GM18951 (cell line): ENCODE measurements at regions of chr6 and their contacts with region 1.

Region 1: DNA sequence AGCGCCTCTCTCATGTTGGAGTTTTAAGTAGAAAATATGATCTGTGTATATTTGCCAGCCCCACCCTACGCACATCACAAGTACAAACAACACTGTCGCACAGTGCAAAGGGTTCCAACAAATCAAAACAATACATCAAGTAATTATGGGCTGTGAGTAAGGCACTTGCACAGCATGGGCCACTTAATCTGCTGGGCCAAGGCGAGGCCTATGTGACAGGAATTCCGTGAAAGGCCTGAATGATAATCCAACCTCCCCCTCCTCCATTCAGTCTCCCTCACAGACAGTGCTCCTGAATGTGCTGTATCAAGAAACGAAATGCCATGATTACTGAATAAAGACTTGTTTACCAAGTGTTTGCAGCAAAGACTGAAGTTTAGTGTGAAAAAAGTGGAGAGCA is 130.1 kb upstream of the SLC2A12 start:
- POLR2A ChIP-seq: no peak

Region 2: GRCh38 chr6:134235937-134236751 is 53.6 kb after region 1 on chr6:
- in situ Hi-C with region 1: loop called (anchors 10 kb)
- POLR2A ChIP-seq: no peak

Region 3: GRCh38 chr6:134647861-134648260 is 465.3 kb after region 1 on chr6:
- in situ Hi-C with region 1: loop called (anchors 5 kb)
- POLR2A ChIP-seq: no peak